K562 (cell line): ENCODE measurements at regions of chr3 and their contacts with region 1.

Region 1: DNA sequence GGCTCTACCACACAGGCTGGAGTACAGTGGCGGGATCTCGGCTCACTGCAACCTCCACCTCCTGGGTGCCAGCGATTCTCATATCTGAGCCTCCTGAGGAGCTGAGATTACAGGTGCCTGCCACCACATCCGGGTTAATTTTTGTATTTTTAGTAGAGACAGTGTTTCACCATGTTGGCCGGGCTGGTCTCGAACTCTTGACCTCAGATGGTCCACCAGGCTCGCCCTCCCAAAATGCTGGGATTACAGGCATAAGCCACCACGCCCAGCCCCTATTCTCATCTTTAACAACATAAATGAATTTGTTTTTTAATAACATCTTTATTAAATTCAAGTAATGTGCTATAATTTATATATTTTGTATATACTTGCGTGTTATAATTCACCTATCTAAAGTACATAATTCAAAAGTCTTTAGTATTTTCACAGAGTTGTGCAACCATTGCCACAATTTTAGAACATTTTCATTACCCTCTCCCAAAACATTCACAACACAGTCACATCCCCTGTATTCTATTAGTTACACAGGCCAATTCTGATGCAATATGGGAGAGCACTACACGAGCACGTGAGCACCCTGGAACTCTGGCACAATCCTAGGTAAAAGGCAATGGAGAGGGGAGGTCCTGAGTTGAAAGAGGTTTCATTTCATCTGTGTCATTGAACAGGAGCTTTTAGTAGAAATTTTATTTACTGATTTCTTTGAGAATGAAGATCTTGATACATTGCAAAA is 21.2 kb upstream of the MTMR14 start:
- DNase-seq: no peak
- ATAC-seq: peak; percentile 77
- H3K4me3 ChIP-seq: no peak overlapping the region
- H3K27ac ChIP-seq: no peak overlapping the region
- H3K4me1 ChIP-seq: peaks cover 0 to 5% of the 10 kb centered on the region in 2 experiments; a peak in 1 of 5 replicates
- H3K27me3 ChIP-seq: no peaks in the 10 kb centered on the region; a peak in 2 of 5 replicates
- CTCF ChIP-seq: no peak
- EP300 ChIP-seq: peak; percentile 16
- POLR2A ChIP-seq: no peak
- RAD21 ChIP-seq: no peak

Region 2: DNA sequence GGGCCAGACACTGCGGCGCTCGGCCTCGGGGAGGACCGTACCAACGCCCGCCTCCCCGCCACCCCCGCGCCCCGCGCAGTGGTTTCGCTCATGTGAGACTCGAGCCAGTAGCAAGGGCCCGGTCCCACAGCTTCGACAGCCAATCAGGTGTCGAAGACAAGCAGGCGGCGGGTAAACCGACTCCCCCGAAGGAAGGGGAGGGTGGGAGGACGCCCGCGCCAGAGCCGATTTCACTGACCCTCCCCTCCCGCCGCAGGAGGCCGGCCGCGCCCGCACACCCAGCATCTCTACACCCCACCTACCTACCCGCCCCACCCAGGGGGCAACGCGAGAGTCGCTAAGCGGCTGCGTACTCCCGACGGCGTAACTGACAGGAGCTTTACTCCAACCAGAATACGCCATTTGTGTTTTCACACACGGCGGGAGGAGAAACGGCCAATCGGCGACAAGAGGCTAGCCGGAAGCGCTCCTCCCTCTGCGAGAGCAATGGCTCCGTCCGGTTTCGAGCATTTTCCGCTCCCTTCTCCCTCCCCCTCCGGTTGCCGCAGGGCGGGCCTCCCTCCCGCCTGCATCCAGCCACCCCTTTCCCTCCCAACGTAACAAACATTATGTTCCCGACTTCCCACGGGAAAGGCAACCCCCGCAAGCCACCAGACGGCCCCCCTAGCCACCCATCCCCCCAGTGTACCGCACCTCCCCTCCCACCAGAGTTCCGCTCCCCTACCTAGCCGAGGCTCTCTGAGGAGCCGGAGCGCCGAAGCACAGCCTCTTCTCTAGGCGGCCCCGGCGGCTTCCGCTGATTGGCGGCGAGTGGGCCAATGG is 231.2 kb before region 1 on chr3:
- CTCF ChIA-PET with region 1: no interaction called
- POLR2A ChIA-PET with region 1: no interaction called
- in situ Hi-C with region 1: no loop called
- intact Hi-C with region 1: no loop called
- DNase-seq: peak; percentile 92 to 100 (median 96)
- ATAC-seq: peak; percentile 80
- H3K4me3 ChIP-seq: peak overlapping the region; percentile 74
- H3K27ac ChIP-seq: peak overlapping the region; percentile 96
- H3K4me1 ChIP-seq: peaks cover 0 to 30% of the 10 kb centered on the region in 2 experiments; a peak in 4 of 5 replicates
- H3K27me3 ChIP-seq: no peaks in the 10 kb centered on the region
- CTCF ChIP-seq: no peak; a peak in 2 of 6 replicates
- EP300 ChIP-seq: peak; percentile 31
- POLR2A ChIP-seq: peak; percentile 97
- RAD21 ChIP-seq: no peak

Region 3: DNA sequence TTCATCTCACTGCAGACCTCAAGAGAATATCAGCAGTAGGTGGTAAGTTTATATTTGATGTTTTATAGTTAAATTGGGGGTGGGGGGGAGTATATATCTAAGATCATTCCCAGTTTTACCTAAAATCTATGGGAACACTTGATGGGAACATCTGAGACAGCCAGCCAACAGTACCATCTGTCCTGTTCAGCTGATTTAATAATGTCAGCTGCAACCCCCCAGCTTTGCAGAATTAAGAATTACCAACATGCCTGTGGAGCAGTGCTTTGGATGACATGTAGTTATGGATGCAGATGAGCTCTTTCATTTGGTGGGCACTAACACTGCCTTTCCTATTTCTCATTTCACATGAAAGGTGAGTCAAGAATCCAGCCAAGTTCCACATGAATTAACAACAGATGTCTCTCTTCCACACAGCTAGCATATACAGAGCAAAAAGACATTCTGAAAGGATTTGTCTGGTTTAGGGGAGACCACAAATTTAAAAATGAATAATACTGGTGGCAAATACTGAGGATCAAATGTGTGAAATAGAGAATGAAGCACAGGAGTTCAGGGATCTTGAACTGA is 154.5 kb before region 1 on chr3:
- CTCF ChIA-PET with region 1: interaction called, 11 read pairs
- POLR2A ChIA-PET with region 1: no interaction called
- in situ Hi-C with region 1: no loop called
- intact Hi-C with region 1: no loop called
- DNase-seq: no peak
- ATAC-seq: no peak
- H3K4me3 ChIP-seq: no peak overlapping the region
- H3K27ac ChIP-seq: no peak overlapping the region
- H3K4me1 ChIP-seq: peaks cover 0 to 10% of the 10 kb centered on the region in 2 experiments; a peak in 3 of 5 replicates
- H3K27me3 ChIP-seq: no peaks in the 10 kb centered on the region
- CTCF ChIP-seq: no peak
- EP300 ChIP-seq: no peak
- POLR2A ChIP-seq: no peak
- RAD21 ChIP-seq: no peak

Region 4: DNA sequence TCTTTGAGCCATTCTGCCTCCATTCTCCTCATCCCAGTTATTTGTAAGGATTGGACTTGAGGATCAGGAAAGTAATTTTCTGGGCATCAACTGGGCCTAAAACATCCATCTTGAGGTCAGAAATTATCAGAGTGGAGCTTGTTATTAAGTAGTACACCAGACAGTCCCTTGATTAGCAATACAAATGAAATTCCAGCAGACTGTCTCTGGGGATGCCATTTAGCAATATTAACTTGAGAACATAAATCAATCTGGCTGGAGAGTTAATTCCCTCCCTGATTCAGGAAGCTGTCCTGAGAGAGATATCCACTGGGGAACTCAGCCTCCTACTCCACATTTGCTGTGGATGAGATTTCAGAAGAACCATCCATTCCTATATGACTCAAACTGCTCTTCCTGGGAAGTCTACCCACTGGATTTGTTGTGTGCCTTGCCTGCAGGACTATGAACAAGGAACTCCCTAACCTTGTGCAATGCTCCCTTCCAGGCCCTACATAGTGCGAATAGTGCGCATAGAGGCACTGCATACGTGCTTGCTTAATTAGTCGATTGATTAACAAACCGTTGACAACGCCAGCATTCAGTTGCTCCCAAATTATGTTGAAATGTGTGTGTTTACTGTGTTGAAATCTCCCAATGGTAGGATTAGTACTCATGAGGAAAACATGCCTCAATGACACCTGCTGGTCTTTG is 14.9 kb before region 1 on chr3:
- CTCF ChIA-PET with region 1: no interaction called
- POLR2A ChIA-PET with region 1: no interaction called
- in situ Hi-C with region 1: no loop called
- intact Hi-C with region 1: no loop called
- DNase-seq: no peak
- ATAC-seq: peak; percentile 48; the same call in 1 of the 3 replicates
- H3K4me3 ChIP-seq: no peak overlapping the region
- H3K27ac ChIP-seq: no peak overlapping the region
- H3K4me1 ChIP-seq: no peaks in the 10 kb centered on the region
- H3K27me3 ChIP-seq: peaks cover 0 to 5% of the 10 kb centered on the region in 2 experiments; a peak in 3 of 5 replicates
- CTCF ChIP-seq: no peak
- EP300 ChIP-seq: no peak
- POLR2A ChIP-seq: no peak
- RAD21 ChIP-seq: no peak